PC-9 (cell line): ENCODE measurements at regions of chr12 and their contacts with region 1.

Region 1: GRCh38 chr12:4648501-4649357 is at the starts of genes AKAP3 and NDUFA9:
- DNase-seq: peak; percentile 66 to 78
- H3K4me3 ChIP-seq: peak within 1 kb of the TSS; percentile 86
- H3K27ac ChIP-seq: peak within 1 kb of the TSS; percentile 84
- H3K4me1 ChIP-seq: peaks cover 19% of the 10 kb centered on the region
- H3K27me3 ChIP-seq: 0 out of 2 replicates have a peak, but pooled peaks cover 4% of the 10 kb centered on the region
- CTCF ChIP-seq: no peak
- total RNA-seq, gene AKAP3: 2.1 and 3.0 TPM in 2 replicates
- total RNA-seq, gene NDUFA9: 139 and 192 TPM in 2 replicates

Region 2: DNA sequence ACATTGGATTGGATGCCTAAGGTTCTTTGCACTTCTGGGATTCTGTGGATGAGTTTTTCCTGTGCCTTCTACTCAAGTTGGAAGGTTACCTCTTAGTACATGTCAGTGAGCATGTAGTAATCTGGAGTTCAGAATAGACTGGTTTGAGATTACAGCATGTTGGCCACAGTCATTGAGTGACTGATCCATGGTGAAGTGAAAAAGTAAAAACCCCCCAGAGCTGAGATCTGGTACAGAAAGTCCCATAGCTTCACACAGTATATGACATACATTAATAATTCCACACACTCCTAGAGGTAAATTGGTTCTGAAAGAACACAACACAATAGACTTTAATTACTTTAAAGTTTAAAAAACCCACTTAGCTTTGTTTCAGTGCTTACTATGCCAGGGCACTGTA is 387.1 kb before region 1 on chr12:
- CTCF ChIA-PET with region 1: no interaction called
- POLR2A ChIA-PET with region 1: no interaction called
- intact Hi-C with region 1: no loop called
- DNase-seq: no peak
- H3K4me3 ChIP-seq: no peak overlapping the region
- H3K27ac ChIP-seq: no peak overlapping the region
- H3K4me1 ChIP-seq: no peaks in the 10 kb centered on the region
- H3K27me3 ChIP-seq: peaks cover 83% of the 10 kb centered on the region
- CTCF ChIP-seq: no peak

Region 3: GRCh38 chr12:4538207-4539160 is 110.2 kb before region 1 on chr12 and contains the start of gene RAD51AP1:
- CTCF ChIA-PET with region 1: no interaction called
- POLR2A ChIA-PET with region 1: no interaction called
- intact Hi-C with region 1: loop called (anchors 5 kb)
- DNase-seq: peak; percentile 93 to 96
- H3K4me3 ChIP-seq: peak within 1 kb of the TSS; percentile 77
- H3K27ac ChIP-seq: peak within 1 kb of the TSS; percentile 41; the same call in 1 of the 2 replicates
- H3K4me1 ChIP-seq: peaks cover 20% of the 10 kb centered on the region
- H3K27me3 ChIP-seq: no peaks in the 10 kb centered on the region
- CTCF ChIP-seq: no peak
- total RNA-seq, gene RAD51AP1: 50.1 and 54.7 TPM in 2 replicates

Region 4: DNA sequence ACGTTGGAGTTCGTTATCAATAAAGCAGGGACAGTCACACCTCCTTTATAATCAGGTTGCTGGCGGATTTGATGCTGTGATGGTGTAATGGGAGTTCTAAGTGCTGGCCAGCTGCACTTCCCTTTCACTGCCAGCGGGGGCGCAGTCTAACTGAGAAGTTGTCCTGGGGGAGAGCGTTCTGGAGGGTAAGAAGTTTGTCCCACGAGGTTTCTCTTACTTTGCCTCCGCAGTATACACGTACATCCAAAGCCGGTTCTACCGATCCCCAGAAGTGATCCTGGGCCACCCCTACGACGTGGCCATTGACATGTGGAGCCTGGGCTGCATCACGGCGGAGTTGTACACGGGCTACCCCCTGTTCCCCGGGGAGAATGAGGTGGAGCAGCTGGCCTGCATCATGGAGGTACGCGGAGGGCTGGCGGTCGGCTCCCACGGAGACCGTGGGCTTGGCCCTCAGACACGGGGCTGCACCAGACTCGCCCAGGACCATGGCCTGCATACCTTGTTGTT is 44.0 kb before region 1 on chr12:
- CTCF ChIA-PET with region 1: interaction called, 3 read pairs
- POLR2A ChIA-PET with region 1: interaction called, 5 read pairs
- intact Hi-C with region 1: loop called (anchors 1 kb)
- DNase-seq: peak; percentile 82 to 84
- H3K4me3 ChIP-seq: peak overlapping the region; percentile 79
- H3K27ac ChIP-seq: no peak overlapping the region
- H3K4me1 ChIP-seq: peaks cover 9% of the 10 kb centered on the region; the same call in 1 of the 2 replicates
- H3K27me3 ChIP-seq: peaks cover 42% of the 10 kb centered on the region
- CTCF ChIP-seq: peak; percentile 100

Region 5: DNA sequence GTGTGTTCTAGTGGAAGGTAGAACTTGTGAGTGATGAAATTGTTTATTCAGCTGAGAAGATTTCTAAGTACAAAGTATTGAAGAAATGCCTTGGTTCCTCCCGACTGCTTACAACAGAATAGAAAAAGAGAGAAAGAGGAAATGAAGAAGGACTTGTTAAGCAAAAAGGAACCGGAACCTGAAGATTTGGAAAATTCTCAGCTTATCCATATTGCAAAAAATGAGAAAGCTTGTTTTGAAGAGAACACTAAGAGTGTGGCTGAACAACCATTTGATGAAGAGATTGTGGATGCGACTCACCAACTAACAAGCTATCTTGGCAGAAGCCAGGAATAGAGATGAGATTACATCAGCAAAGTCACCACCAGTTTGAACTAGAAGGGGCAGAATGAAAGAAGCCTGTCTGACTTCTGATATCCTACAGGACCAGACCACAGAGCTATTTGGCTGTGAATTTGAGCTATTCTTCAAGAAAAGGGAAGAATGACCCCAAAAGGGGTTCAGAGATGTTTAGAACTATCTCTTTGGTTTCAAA is 15.3 kb after region 1 on chr12:
- CTCF ChIA-PET with region 1: interaction called, 12 read pairs
- POLR2A ChIA-PET with region 1: no interaction called
- intact Hi-C with region 1: no loop called
- DNase-seq: no peak
- H3K4me3 ChIP-seq: no peak overlapping the region
- H3K27ac ChIP-seq: no peak overlapping the region
- H3K4me1 ChIP-seq: no peaks in the 10 kb centered on the region
- H3K27me3 ChIP-seq: no peaks in the 10 kb centered on the region
- CTCF ChIP-seq: no peak

Region 6: GRCh38 chr12:4685317-4685716 is 36.6 kb after region 1 on chr12:
- CTCF ChIA-PET with region 1: no interaction called
- POLR2A ChIA-PET with region 1: no interaction called
- intact Hi-C with region 1: no loop called
- DNase-seq: no peak
- H3K4me3 ChIP-seq: no peak overlapping the region
- H3K27ac ChIP-seq: no peak overlapping the region
- H3K4me1 ChIP-seq: no peaks in the 10 kb centered on the region
- H3K27me3 ChIP-seq: no peaks in the 10 kb centered on the region
- CTCF ChIP-seq: no peak

Region 7: DNA sequence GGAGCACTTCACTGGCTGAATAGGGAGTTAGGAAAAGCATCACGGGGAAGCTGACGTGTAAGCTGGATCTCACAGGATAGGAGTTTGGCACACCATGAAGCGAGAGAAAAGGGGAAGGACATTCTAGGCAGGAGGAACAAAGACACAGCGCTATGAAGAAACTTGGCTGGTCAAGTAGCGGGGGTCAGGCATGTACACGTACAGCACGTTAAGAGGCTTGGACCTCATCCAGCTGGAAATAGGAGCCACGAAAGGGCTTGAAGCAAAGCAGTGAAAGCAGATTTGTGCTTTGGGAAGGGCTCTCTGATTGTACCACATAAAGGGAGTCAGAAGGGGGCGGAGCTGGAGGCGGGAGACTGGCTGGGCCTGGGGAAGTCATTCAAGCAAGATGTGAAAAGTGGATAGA is 51.9 kb after region 1 on chr12:
- CTCF ChIA-PET with region 1: no interaction called
- POLR2A ChIA-PET with region 1: interaction called, 12 read pairs
- intact Hi-C with region 1: no loop called
- DNase-seq: no peak
- H3K4me3 ChIP-seq: no peak overlapping the region
- H3K27ac ChIP-seq: no peak overlapping the region
- H3K4me1 ChIP-seq: no peaks in the 10 kb centered on the region
- H3K27me3 ChIP-seq: peaks cover 9% of the 10 kb centered on the region
- CTCF ChIP-seq: no peak